ENCODE measurements at regions of chr19 and their contacts with region 1.

Region 1: GRCh38 chr19:17755977-17756670 is 4.8 kb downstream of the FCHO1 start:
- DNase-seq: peak in 1 of 2 experiments; percentile 89
- H3K4me3 ChIP-seq: no peak overlapping the region
- H3K27ac ChIP-seq: no peak overlapping the region; the same call in 1 of the 2 replicates
- H3K4me1 ChIP-seq: peaks cover 0 to 9% (median 0%) of the 10 kb centered on the region in 4 experiments; a peak in 1 of 7 replicates
- H3K27me3 ChIP-seq: no peaks in the 10 kb centered on the region
- CTCF ChIP-seq: no peak
- EP300 ChIP-seq: no peak
- POLR2A ChIP-seq: no peak
- RAD21 ChIP-seq: no peak

Region 2: GRCh38 chr19:17641181-17641580 is 114.9 kb before region 1 on chr19:
- CTCF ChIA-PET with region 1: no interaction called
- POLR2A ChIA-PET with region 1: no interaction called
- DNase-seq: no peak
- H3K4me3 ChIP-seq: no peak overlapping the region
- H3K27ac ChIP-seq: no peak overlapping the region
- H3K4me1 ChIP-seq: no peaks in the 10 kb centered on the region
- H3K27me3 ChIP-seq: no peaks in the 10 kb centered on the region
- CTCF ChIP-seq: no peak
- EP300 ChIP-seq: no peak
- POLR2A ChIP-seq: no peak
- RAD21 ChIP-seq: no peak

Region 3: DNA sequence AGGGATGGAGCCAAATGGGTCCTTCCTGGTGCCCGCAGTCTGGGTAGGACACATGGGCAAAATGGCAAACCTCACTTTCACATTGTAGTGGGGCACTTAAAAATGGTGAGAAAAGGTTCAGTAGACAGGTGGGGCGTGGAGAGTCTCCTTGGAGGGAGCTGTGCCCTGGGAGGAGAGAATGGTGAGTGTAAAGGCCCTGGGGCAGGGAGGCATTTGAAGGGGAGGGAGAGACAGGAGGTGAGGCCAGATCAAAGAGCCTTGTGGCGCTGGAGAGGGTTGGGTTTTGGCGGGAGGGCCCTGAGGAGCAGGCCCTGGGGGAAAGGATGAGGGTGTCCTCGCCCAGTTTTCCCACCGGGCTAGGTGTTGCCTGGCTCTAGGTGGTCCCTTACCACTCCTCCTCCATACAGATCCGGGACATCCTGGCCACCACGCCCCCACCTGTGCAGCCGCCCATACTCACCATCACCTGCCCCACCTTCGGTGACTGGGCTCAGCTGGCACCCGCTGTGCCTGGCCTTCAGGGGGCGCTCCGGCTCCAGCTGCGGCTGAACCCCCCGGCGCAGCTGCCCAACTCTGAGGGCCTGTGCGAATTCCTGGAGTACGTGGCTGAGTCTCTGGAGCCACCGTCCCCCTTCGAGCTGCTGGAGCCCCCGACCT is 30.6 kb before region 1 on chr19:
- CTCF ChIA-PET with region 1: interaction called, 13 read pairs
- POLR2A ChIA-PET with region 1: interaction called, 3 read pairs
- DNase-seq: peak in 1 of 2 experiments; percentile 86
- H3K4me3 ChIP-seq: no peak overlapping the region
- H3K27ac ChIP-seq: no peak overlapping the region
- H3K4me1 ChIP-seq: peaks cover 0 to 1% (median under 1%) of the 10 kb centered on the region in 4 experiments; a peak in 3 of 7 replicates
- H3K27me3 ChIP-seq: no peaks in the 10 kb centered on the region
- CTCF ChIP-seq: peak; percentile 85 to 89 (median 89)
- EP300 ChIP-seq: no peak
- POLR2A ChIP-seq: no peak
- RAD21 ChIP-seq: peak; percentile 73 to 88

Region 4: DNA sequence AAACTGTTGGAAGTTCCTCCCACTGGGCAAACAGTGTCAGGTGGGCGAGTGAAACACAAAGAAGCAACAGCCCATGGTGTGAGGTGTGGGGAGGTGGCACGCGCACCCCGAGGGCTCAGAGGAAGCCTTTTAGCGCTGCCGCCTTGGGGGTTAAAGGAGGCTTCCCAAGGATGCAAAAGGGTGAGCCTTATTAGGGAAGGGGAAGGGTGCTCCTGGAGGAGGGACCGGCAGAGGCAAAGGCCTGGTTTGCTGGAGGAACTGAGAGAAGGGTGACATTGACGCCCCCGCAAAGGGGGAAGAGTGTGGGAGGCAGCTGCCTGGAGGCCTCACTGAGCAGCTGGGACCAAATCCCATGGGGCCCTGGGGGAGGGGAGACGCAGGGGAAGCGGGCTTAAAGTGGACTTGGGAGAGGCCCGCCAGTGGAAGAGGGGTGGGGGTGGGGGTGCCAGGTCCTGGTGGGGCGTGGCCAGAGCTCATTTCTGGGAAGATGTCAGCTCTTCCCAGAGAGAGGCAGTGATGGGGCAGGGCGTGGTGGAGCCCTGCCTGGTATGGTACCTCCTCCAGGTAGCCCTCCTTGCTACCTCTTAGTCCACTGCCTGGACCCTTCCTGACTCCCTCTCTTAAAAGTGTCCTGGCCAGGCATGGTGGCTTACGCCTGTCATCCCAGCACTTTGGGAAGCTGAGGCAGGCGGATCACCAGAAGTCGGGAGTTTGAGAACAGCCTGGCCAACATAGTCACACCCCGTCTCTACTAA is 16.8 kb before region 1 on chr19:
- CTCF ChIA-PET with region 1: interaction called, 18 read pairs
- POLR2A ChIA-PET with region 1: interaction called, 21 read pairs
- DNase-seq: no peak
- H3K4me3 ChIP-seq: no peak overlapping the region
- H3K27ac ChIP-seq: no peak overlapping the region
- H3K4me1 ChIP-seq: peaks cover 0 to 3% (median 2%) of the 10 kb centered on the region in 4 experiments; a peak in 4 of 7 replicates
- H3K27me3 ChIP-seq: no peaks in the 10 kb centered on the region
- CTCF ChIP-seq: no peak
- EP300 ChIP-seq: no peak
- POLR2A ChIP-seq: no peak
- RAD21 ChIP-seq: no peak

Region 5: GRCh38 chr19:17775245-17775916 is 19.3 kb after region 1 on chr19:
- CTCF ChIA-PET with region 1: interaction called, 17 read pairs
- POLR2A ChIA-PET with region 1: interaction called, 3 read pairs
- DNase-seq: peak in 1 of 2 experiments; percentile 92
- H3K4me3 ChIP-seq: no peak overlapping the region
- H3K27ac ChIP-seq: no peak overlapping the region
- H3K4me1 ChIP-seq: peaks cover 0 to 9% (median 6%) of the 10 kb centered on the region in 4 experiments; a peak in 5 of 7 replicates
- H3K27me3 ChIP-seq: no peaks in the 10 kb centered on the region
- CTCF ChIP-seq: peak; percentile 62 to 90 (median 87)
- EP300 ChIP-seq: no peak
- POLR2A ChIP-seq: no peak
- RAD21 ChIP-seq: peak; percentile 55 to 76

Measured in H1 (cell line).